SK-N-SH (cell line): ENCODE measurements at regions of chr1 and their contacts with region 1.

Region 1: DNA sequence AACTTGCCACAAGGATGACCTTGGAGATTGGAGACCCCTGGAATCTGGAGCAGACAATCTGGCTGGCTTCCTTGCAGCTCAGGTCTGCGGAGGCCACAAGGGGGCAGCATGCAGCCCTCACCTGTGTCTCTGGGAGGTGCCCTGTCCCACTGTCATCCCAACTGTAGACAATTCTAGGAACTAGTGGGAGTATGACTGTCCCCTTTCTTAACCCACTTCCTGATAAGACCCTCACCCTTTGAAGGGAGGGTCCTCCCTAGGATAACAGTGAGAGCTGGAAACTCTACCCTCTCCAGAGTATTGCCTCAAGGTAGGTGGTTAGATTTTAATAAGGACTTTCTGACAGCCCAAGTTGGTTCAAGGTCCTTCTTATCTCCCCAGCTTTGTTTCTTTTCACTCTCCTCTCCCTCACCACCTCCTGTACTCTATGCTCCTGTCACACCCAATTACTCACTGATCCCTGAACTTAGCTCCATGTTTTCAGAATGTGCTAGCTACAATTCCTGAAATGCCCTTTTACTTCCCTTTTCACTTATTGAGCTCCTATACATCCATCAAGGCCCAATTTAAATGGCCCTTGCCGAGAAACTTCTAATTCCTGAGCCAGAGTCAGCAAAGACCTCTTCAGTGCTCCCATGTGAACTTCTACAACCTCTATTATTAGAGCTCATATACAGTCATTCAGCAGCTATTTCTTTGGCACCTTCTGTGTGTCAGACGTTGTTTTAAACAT is 9.2 kb upstream of the KCNQ4 start:
- DNase-seq: peak; percentile 69
- H3K4me3 ChIP-seq: no peak overlapping the region
- H3K27ac ChIP-seq: no peak overlapping the region
- H3K4me1 ChIP-seq: peaks cover 0 to under 1% of the 10 kb centered on the region in 2 experiments; a peak in 1 of 4 replicates
- H3K27me3 ChIP-seq: no peaks in the 10 kb centered on the region
- CTCF ChIP-seq: peak; percentile 74
- EP300 ChIP-seq: no peak
- RAD21 ChIP-seq: peak; percentile 62

Region 2: DNA sequence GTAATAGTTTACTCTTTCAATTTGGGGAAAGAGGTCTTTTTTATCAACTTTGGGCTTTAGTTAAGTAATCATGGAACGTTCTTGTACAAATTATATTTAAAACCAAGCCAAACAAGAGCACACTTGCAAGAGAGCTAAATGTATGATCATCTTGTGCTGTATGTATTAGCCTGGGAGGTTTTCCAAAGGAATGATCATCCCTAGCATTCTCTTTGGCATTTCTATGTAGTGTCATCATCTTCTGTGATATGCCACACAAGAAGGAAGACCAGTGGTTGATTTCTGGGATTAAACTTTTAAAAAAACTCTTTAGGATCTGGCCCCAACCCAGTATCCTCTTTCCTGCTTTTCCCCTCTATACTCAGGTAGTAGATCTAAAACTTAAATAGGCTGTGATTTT is 29.3 kb before region 1 on chr1:
- CTCF ChIA-PET with region 1: interaction called, 19 read pairs
- POLR2A ChIA-PET with region 1: no interaction called
- DNase-seq: no peak
- H3K4me3 ChIP-seq: no peak overlapping the region
- H3K27ac ChIP-seq: peak overlapping the region in 1 of 2 experiments; percentile 6; a peak in 1 of 4 replicates
- H3K4me1 ChIP-seq: 0 out of 4 replicates have a peak, but pooled peaks cover 0 to 7% of the 10 kb centered on the region in 2 experiments
- H3K27me3 ChIP-seq: no peaks in the 10 kb centered on the region
- CTCF ChIP-seq: no peak
- EP300 ChIP-seq: no peak
- RAD21 ChIP-seq: no peak

Region 3: DNA sequence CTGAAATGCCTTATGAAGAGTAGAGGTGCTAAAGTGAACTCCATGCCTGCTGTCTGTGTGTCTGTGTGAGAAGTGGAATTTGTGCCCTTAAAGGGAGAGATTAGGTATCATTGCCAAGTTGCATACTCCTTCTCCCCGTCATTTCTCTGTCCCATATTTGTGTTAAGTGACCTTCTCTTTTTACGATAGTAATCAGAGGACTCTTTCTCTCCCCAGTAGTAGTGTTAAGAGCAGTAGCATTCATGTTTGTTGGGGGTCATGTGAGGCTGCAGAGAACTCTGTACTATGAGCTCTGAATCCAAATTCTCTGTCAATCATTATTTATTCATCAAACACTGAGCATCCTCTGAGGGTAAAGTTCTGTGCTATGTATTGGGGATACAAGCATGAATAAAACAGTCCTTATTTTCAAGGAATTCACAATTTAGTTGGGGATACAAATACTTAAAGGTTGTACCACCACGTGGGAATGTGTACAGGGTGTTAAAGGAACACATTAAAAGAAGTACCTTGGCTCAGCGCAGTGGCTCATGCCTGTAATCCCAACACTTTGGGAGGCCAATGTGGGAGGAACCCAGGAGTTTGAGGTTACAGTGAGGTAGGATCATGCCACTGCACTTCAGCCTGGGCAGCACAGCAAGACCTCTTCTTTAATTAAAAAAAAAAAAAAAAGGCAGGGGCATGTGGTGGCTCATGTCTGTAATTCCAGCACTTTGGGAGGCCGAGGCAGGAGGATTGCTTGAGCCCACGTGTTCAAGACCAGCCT is 15.7 kb before region 1 on chr1:
- CTCF ChIA-PET with region 1: interaction called, 31 read pairs
- POLR2A ChIA-PET with region 1: no interaction called
- DNase-seq: no peak
- H3K4me3 ChIP-seq: no peak overlapping the region
- H3K27ac ChIP-seq: no peak overlapping the region
- H3K4me1 ChIP-seq: no peaks in the 10 kb centered on the region
- H3K27me3 ChIP-seq: no peaks in the 10 kb centered on the region
- CTCF ChIP-seq: no peak
- EP300 ChIP-seq: no peak
- RAD21 ChIP-seq: no peak

Region 4: DNA sequence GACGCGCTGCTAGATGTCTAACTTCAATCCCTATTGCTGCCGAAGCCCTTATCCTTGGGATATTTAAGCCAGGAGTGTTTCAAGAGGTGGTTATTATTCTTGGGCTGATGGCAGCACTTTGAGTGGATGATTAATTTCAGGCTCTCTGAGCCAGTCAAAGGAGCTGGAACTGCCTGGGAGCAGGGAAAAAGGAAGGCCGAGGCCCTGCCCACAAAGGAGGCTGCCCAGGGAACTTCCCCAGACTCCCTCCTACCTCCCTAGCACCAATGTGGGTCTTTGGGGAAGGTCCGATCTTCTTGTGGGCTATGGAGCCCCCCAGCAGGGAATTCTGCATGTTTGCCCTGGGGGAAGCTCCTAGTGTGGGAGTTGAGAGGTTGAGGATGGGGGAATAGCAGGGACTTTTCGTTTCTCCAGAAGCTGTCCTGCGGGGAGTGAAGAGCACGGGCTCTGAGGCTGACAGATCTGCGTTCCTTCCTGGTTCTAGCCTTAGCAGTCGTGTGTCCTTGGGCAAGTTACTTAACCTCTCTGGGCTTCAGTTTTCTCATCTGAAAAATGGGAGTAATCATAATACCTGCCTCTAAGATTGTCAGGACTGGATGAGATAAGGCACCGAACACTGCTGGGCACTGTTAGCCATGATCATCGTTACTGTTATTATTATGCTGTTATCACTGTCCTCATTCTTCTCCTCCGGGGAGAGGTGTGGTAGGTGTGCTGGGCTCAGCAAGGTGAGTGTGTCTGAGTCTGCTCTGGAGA is 15.4 kb after region 1 on chr1:
- CTCF ChIA-PET with region 1: interaction called, 17 read pairs
- POLR2A ChIA-PET with region 1: interaction called, 3 read pairs
- DNase-seq: no peak
- H3K4me3 ChIP-seq: no peak overlapping the region
- H3K27ac ChIP-seq: no peak overlapping the region
- H3K4me1 ChIP-seq: no peaks in the 10 kb centered on the region
- H3K27me3 ChIP-seq: no peaks in the 10 kb centered on the region
- CTCF ChIP-seq: no peak
- EP300 ChIP-seq: no peak
- RAD21 ChIP-seq: no peak

Region 5: GRCh38 chr1:40951943-40952743 is 177.7 kb after region 1 on chr1:
- CTCF ChIA-PET with region 1: interaction called, 75 read pairs
- POLR2A ChIA-PET with region 1: no interaction called
- DNase-seq: peak; percentile 85
- H3K4me3 ChIP-seq: no peak overlapping the region
- H3K27ac ChIP-seq: no peak overlapping the region
- H3K4me1 ChIP-seq: peaks cover 5 to 9% of the 10 kb centered on the region in 2 experiments; a peak in 1 of 4 replicates
- H3K27me3 ChIP-seq: no peaks in the 10 kb centered on the region
- CTCF ChIP-seq: peak; percentile 93
- EP300 ChIP-seq: no peak
- RAD21 ChIP-seq: peak; percentile 91